Activated CD4-positive, alpha-beta memory T cell treated with anti-CD3 and anti-CD28 coated beads for 36 hours (primary cell): ENCODE measurements at regions of chr12 and their contacts with region 1.

Region 1: GRCh38 chr12:53984901-53985709 is at the start of gene HOXC10:
- DNase-seq: peak; percentile 92
- H3K4me3 Mint-ChIP-seq: peak within 1 kb of the TSS; percentile 52
- H3K27ac Mint-ChIP-seq: no peak within 1 kb of the TSS
- H3K4me1 Mint-ChIP-seq: peaks cover 25% of the 10 kb centered on the region
- H3K27me3 Mint-ChIP-seq: peaks cover 87% of the 10 kb centered on the region
- total RNA-seq, gene HOXC10: not detected

Region 2: DNA sequence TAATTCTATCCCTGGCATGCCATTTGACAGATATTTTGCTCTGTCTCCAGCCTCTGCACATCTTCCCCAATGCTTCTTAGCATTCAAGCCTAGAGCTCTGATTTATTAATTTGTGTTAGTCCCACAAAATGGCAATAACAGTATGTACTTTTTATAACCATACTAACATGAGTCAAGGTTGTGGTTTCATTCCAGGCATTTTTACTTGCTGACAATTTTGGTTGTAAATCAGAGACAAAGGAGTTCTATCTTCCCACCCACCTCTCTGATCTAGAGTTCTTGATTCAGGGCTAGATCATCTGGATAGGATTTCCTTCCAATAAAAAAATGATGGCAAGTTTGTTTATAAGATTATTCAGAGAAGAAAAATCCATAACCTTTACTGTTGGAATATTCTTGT is 214.8 kb before region 1 on chr12:
- CTCF ChIA-PET with region 1: no interaction called
- POLR2A ChIA-PET with region 1: no interaction called
- intact Hi-C with region 1: no loop called
- DNase-seq: no peak
- H3K4me3 Mint-ChIP-seq: no peak overlapping the region
- H3K27ac Mint-ChIP-seq: no peak overlapping the region
- H3K4me1 Mint-ChIP-seq: no peaks in the 10 kb centered on the region
- H3K27me3 Mint-ChIP-seq: peaks cover 34% of the 10 kb centered on the region

Region 3: DNA sequence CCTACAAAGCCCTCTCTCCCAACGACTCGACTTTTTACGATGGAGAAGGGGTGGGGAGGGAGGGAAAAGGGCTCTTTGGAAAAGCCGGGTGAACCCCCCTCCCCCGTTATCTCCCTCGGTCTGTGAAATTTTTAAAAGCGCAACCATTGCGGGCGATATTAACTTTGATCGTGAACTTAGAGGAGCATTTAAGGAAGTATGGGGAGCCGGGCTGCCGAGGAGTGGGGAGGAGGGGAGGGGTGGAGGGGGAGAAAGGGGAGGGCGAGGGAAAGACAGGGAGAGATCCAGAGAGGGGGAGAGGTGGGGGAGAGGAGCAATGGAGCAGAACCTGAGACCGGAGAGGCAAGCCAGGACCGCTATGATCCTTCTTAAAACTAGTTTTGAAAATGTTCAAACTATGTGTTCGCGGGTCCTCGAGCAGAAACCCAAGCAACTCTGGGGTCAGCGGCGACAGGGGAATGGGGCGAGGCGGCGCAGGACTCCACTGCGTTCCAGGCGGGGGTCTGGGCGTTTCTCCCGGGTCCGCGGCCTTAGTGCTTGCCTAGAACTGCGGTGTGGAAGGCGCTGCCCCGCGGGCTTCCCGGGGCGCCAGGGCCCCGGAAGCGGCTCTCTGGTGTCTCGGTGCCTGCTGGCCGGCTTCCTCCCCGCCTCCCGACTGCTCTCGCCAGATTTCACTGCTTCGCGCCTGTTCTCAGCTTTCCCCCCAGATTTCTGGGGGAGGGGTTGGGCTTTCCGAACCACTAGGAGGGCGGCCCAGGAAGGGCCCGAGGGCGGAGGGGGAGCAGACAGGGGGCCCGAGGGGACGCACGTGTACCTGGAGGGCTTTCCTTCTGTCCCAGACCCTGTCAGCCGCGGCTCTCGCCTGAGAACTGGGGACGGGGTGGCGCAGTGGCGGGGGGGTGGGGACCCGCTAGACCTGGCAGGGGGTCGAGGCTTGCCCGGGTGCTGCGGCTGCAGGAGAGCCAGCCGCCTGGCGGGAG is 10.7 kb before region 1 on chr12 and contains the start of gene HOTAIR:
- CTCF ChIA-PET with region 1: interaction called, 5 read pairs
- POLR2A ChIA-PET with region 1: no interaction called
- intact Hi-C with region 1: loop called (anchors 2 kb)
- DNase-seq: peak; percentile 45
- H3K4me3 Mint-ChIP-seq: peak within 1 kb of the TSS; percentile 50
- H3K27ac Mint-ChIP-seq: peak within 1 kb of the TSS; percentile 50
- H3K4me1 Mint-ChIP-seq: peaks cover 22% of the 10 kb centered on the region
- H3K27me3 Mint-ChIP-seq: peaks cover 84% of the 10 kb centered on the region
- total RNA-seq, gene HOTAIR: not detected

Region 4: DNA sequence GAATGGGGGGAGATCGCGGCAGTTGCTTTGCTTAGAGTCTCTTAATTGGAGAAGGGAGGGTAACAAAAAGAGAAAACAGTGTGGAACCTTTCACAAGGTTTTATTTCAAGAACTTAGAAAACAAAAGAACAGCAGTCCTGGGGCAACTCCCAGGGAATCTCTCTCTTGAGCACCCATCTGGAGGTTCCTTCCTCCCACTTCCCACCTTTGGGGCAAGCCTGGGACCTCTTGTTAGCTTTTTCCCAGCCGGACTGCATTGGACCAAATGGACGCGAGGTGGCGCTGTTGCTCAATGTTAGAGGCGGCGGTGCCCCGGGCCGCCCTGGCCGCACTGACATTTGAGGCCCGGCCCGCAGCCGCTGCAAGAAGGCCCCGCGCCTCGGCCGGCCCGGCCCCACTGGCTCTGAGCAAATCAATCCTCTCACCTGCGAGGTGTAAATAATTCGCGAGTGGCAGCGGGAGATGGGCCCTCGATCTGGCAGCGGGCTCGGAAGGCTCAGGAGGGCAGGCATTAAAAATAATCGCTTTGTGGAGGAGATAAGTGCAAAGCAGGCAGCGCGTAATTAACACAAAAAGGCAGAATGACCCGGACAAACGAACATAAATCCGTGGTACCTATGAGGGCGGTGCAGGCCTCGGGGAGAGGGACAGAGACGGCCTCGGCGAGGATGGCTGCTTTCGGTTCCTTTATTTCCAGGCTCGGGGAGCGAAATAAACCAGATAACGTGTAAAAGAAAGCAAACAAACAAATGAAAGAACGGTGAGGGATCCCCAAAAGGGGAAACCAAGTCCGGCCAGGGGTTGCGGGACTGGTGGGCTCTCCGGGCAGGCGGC is 21.0 kb after region 1 on chr12:
- CTCF ChIA-PET with region 1: interaction called, 14 read pairs
- POLR2A ChIA-PET with region 1: no interaction called
- intact Hi-C with region 1: no loop called
- DNase-seq: peak; percentile 89
- H3K4me3 Mint-ChIP-seq: peak overlapping the region; percentile 68
- H3K27ac Mint-ChIP-seq: no peak overlapping the region
- H3K4me1 Mint-ChIP-seq: peaks cover 22% of the 10 kb centered on the region
- H3K27me3 Mint-ChIP-seq: peaks cover 91% of the 10 kb centered on the region

Region 5: GRCh38 chr12:54053751-54054741 is 68.9 kb after region 1 on chr12 and contains the start of gene HOXC4:
- CTCF ChIA-PET with region 1: interaction called, 5 read pairs
- POLR2A ChIA-PET with region 1: no interaction called
- intact Hi-C with region 1: loop called (anchors 5 kb)
- DNase-seq: no peak
- H3K4me3 Mint-ChIP-seq: peak within 1 kb of the TSS; percentile 33
- H3K27ac Mint-ChIP-seq: no peak within 1 kb of the TSS
- H3K4me1 Mint-ChIP-seq: peaks cover 28% of the 10 kb centered on the region
- H3K27me3 Mint-ChIP-seq: peaks cover 78% of the 10 kb centered on the region
- total RNA-seq, gene HOXC4: 0.17 TPM in 1 of 2 experiments, not detected in the other

Region 6: GRCh38 chr12:54201001-54201794 is 216.1 kb after region 1 on chr12:
- CTCF ChIA-PET with region 1: interaction called, 46 read pairs
- POLR2A ChIA-PET with region 1: no interaction called
- intact Hi-C with region 1: no loop called
- DNase-seq: peak; percentile 77
- H3K4me3 Mint-ChIP-seq: no peak overlapping the region
- H3K27ac Mint-ChIP-seq: no peak overlapping the region
- H3K4me1 Mint-ChIP-seq: peaks cover 3% of the 10 kb centered on the region
- H3K27me3 Mint-ChIP-seq: peaks cover 48% of the 10 kb centered on the region

Region 7: DNA sequence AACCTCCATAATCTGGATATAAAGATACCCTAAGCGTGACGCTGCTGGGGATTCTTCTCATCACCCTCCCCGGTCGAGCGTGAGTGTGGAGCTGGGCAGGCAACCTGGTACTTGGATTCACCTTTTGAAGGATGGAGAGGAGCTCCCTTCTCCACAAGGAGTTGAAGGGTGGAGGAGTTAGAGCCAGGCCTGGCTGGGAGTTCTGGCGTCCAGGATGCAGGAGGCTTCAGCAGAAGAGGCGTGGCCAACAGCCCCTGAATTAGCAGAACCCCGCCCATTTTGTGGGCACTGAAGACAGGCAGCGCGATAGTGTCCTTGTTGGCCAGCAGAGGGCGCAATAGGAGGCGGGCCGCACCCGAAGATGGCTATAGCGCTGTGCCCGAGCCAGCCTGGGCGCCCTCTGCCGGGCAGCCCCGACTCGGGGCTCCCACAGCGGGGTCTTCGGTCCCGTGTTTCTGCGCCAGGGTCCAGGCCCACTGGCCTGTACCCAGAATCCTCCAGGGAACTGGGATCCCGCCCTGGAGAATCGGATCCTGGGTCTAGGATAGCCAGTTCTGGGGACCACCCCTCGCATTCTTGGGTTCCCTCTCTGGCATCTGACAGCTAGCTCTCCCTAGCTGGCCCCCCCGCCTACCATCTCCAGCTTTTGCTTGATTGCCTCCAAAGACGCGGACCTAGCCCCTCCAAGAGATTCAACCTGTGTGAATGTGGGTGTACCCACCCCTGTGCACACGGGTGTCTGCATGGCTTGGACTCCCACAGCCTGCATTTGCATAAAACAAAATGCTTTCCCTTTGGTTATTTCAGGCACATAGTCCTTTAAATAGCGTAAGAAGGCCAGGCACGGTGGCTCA is 229.7 kb after region 1 on chr12:
- CTCF ChIA-PET with region 1: interaction called, 21 read pairs
- POLR2A ChIA-PET with region 1: interaction called, 3 read pairs
- intact Hi-C with region 1: no loop called
- DNase-seq: peak; percentile 94
- H3K4me3 Mint-ChIP-seq: peak overlapping the region; percentile 70
- H3K27ac Mint-ChIP-seq: no peak overlapping the region
- H3K4me1 Mint-ChIP-seq: peaks cover 20% of the 10 kb centered on the region
- H3K27me3 Mint-ChIP-seq: no peaks in the 10 kb centered on the region